ENCODE measurements at regions of chr16 and their contacts with region 1.

Region 1: GRCh38 chr16:495127-495748 is 32.3 kb upstream of the CAPN15 start:
- DNase-seq: peak; percentile 73
- ATAC-seq: peak; percentile 93
- H3K4me3 Mint-ChIP-seq: no peak overlapping the region
- H3K27ac Mint-ChIP-seq: no peak overlapping the region
- H3K4me1 Mint-ChIP-seq: peaks cover 15% of the 10 kb centered on the region
- H3K27me3 Mint-ChIP-seq: no peaks in the 10 kb centered on the region
- CTCF ChIP-seq: no peak

Region 2: DNA sequence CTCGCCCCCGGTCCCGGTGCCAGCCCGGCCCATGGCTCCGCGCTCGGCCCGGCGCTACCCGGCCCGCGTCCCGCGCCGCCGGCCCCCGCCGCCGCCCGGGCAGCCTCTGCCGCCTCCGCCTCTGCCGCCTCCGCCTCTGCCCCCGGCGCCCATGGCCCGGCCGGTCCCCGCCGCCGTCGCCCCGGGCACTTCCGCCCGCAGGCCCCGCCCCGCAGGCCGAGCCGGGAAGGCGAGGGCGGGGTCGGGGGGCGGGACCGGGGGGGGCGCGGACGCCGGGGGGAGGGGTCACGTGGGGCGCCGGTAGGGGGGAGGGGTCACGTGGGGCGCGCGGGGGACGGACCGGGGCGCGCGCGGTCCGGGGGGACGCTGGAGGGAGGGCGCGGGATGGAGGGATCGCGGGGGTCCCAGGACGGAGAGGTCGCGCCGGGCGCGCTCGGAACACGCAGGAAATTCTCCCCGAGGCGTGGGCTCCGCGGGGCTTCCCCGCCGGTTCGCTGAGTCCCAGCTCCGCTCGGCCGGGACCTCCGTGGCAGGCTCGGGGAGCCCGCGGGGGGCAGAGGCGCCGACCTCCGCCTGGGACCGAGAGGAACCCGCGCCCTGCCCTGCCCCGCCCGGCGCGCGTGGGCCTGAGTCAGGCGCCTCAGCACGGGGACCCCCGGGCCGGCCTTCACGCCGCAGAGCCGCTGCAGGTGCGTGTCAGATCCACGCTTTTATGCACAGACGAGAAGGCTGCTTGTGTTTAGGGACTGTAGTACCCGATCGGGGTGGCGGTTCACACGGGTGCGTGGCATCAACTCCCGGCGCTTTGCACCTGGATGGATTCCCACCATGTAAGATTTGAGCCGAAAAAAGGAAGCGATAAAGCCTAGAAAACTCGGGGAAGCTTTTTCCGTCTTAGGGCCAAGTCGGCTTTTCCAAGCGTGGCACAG is 113.2 kb before region 1 on chr16 and contains the start of gene PGAP6:
- CTCF ChIA-PET with region 1: interaction called, 13 read pairs
- POLR2A ChIA-PET with region 1: no interaction called
- DNase-seq: peak; percentile 57
- ATAC-seq: no peak
- H3K4me3 Mint-ChIP-seq: peak within 1 kb of the TSS; percentile 79
- H3K27ac Mint-ChIP-seq: peak within 1 kb of the TSS; percentile 98
- H3K4me1 Mint-ChIP-seq: peaks cover 40% of the 10 kb centered on the region
- H3K27me3 Mint-ChIP-seq: no peaks in the 10 kb centered on the region
- CTCF ChIP-seq: no peak
- total RNA-seq, gene PGAP6: 104 to 108 TPM (median 107 TPM) in 3 replicates

Region 3: DNA sequence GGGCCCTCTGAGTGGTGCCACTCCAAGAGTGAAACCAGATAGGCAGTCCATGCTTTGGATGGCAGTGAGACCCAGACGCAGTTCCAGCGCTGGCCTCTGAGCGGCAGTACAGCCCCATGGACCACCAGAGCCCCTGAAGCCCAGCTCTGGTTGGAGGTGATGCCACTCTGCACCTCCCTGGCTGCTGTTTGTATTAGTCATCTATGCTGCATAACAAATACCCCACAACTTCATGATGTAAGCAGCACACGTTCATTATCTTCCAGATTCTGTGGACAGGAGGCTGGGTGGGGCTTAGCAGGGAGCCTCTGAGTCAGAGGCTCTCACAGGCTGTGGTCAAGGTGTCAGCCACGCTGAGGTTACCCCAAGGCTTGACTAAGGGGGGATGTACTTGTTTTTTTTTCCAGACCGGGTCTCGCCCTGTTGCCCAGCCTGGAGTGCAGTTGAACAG is 103.3 kb before region 1 on chr16:
- CTCF ChIA-PET with region 1: interaction called, 26 read pairs
- POLR2A ChIA-PET with region 1: no interaction called
- DNase-seq: peak; percentile 88
- ATAC-seq: peak; percentile 85
- H3K4me3 Mint-ChIP-seq: no peak overlapping the region
- H3K27ac Mint-ChIP-seq: no peak overlapping the region
- H3K4me1 Mint-ChIP-seq: peaks cover 27% of the 10 kb centered on the region
- H3K27me3 Mint-ChIP-seq: peaks cover 3% of the 10 kb centered on the region; the same call in 1 of the 2 replicates
- CTCF ChIP-seq: peak; percentile 97

Region 4: GRCh38 chr16:401468-402348 is 93.5 kb before region 1 on chr16 and contains the start of gene DECR2:
- CTCF ChIA-PET with region 1: interaction called, 13 read pairs
- POLR2A ChIA-PET with region 1: interaction called, 3 read pairs
- DNase-seq: peak; percentile 96
- ATAC-seq: peak; percentile 71
- H3K4me3 Mint-ChIP-seq: peak within 1 kb of the TSS; percentile 86
- H3K27ac Mint-ChIP-seq: peak within 1 kb of the TSS; percentile 92
- H3K4me1 Mint-ChIP-seq: peaks cover 18% of the 10 kb centered on the region
- H3K27me3 Mint-ChIP-seq: peaks cover under 1% of the 10 kb centered on the region; the same call in 1 of the 2 replicates
- CTCF ChIP-seq: no peak
- total RNA-seq, gene DECR2: 37.8 to 43.6 TPM (median 40.7 TPM) in 3 replicates

Region 5: DNA sequence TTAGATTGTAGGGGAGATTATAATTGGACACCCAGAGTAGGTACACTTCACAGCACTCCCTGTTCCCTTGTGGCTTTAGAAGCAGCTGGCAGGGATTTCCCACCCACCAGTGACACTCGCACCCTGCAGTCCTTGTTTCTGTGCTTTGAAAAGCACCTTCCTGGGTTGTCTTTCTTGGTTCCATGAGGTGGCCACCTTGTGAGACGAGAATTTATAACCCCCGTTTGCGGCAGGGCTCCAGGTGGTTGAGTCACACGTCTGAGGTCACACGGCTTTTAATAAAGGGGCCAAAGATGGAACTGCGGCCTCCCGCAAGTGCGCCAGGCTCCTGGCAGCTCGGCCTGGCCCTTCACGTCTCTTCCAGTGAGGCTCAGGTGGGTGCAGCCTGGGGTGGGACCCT is 17.5 kb before region 1 on chr16:
- CTCF ChIA-PET with region 1: interaction called, 13 read pairs
- POLR2A ChIA-PET with region 1: no interaction called
- DNase-seq: no peak
- ATAC-seq: no peak
- H3K4me3 Mint-ChIP-seq: no peak overlapping the region
- H3K27ac Mint-ChIP-seq: no peak overlapping the region
- H3K4me1 Mint-ChIP-seq: peaks cover 16% of the 10 kb centered on the region
- H3K27me3 Mint-ChIP-seq: no peaks in the 10 kb centered on the region
- CTCF ChIP-seq: no peak